CD8-positive, alpha-beta T cell (primary cell): ENCODE measurements at regions of chr12 and their contacts with region 1.

Region 1: GRCh38 chr12:42574851-42575266 is 14.7 kb downstream of the PRICKLE1 start:
- DNase-seq: no peak
- ATAC-seq: no peak
- H3K4me3 ChIP-seq: no peak overlapping the region
- H3K4me3 Mint-ChIP-seq: no peak overlapping the region
- H3K27ac ChIP-seq: no peak overlapping the region
- H3K27ac Mint-ChIP-seq: no peak overlapping the region
- H3K4me1 ChIP-seq: no peaks in the 10 kb centered on the region
- H3K4me1 Mint-ChIP-seq: no peaks in the 10 kb centered on the region
- H3K27me3 ChIP-seq: no peaks in the 10 kb centered on the region
- H3K27me3 Mint-ChIP-seq: peaks cover 3% of the 10 kb centered on the region
- CTCF ChIP-seq: no peak

Region 2: GRCh38 chr12:40946612-40947194 is 1628.2 kb before region 1 on chr12:
- CTCF ChIA-PET with region 1: no interaction called
- POLR2A ChIA-PET with region 1: no interaction called
- intact Hi-C with region 1: loop called in 1 of 2 experiments (anchors 10 kb)
- DNase-seq: peak in 2 of 9 experiments; percentile 17 to 33
- ATAC-seq: no peak
- H3K4me3 ChIP-seq: no peak overlapping the region
- H3K4me3 Mint-ChIP-seq: no peak overlapping the region
- H3K27ac ChIP-seq: no peak overlapping the region
- H3K27ac Mint-ChIP-seq: no peak overlapping the region
- H3K4me1 ChIP-seq: no peaks in the 10 kb centered on the region
- H3K4me1 Mint-ChIP-seq: no peaks in the 10 kb centered on the region
- H3K27me3 ChIP-seq: no peaks in the 10 kb centered on the region
- H3K27me3 Mint-ChIP-seq: no peaks in the 10 kb centered on the region
- CTCF ChIP-seq: peak; percentile 61

Region 3: DNA sequence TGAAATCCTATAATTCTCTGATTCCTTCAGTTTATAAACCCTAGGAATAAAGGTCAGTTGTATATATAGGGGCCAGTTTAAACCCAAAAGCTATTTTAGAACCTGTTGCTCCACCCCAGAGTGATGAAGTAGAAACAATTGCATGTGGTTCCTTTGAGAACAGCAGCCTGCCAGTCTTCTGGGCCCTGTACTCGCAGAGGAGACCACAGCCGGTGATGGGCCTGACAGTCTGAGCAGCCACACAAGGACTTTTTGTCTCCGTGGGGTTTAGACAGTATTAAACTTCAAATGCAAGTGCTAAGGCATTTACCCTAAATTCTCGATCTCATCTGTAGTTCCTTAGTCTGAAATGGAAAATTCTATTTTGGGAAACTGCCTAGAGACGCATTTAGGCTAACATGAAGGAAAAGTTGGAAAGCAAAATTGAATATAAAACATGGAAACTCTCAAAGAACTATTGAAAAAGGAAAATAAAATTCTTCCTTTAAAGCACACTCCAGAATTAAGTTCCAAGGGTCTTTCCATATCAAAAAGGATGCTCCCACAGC is 65.9 kb before region 1 on chr12:
- CTCF ChIA-PET with region 1: no interaction called
- POLR2A ChIA-PET with region 1: no interaction called
- intact Hi-C with region 1: no loop called
- DNase-seq: no peak
- ATAC-seq: no peak
- H3K4me3 ChIP-seq: no peak overlapping the region
- H3K4me3 Mint-ChIP-seq: no peak overlapping the region
- H3K27ac ChIP-seq: no peak overlapping the region
- H3K27ac Mint-ChIP-seq: no peak overlapping the region
- H3K4me1 ChIP-seq: no peaks in the 10 kb centered on the region
- H3K4me1 Mint-ChIP-seq: no peaks in the 10 kb centered on the region
- H3K27me3 ChIP-seq: no peaks in the 10 kb centered on the region
- H3K27me3 Mint-ChIP-seq: peaks cover 9% of the 10 kb centered on the region
- CTCF ChIP-seq: no peak